PC-9 (cell line): ENCODE measurements at regions of chr17 and their contacts with region 1.

Region 1: DNA sequence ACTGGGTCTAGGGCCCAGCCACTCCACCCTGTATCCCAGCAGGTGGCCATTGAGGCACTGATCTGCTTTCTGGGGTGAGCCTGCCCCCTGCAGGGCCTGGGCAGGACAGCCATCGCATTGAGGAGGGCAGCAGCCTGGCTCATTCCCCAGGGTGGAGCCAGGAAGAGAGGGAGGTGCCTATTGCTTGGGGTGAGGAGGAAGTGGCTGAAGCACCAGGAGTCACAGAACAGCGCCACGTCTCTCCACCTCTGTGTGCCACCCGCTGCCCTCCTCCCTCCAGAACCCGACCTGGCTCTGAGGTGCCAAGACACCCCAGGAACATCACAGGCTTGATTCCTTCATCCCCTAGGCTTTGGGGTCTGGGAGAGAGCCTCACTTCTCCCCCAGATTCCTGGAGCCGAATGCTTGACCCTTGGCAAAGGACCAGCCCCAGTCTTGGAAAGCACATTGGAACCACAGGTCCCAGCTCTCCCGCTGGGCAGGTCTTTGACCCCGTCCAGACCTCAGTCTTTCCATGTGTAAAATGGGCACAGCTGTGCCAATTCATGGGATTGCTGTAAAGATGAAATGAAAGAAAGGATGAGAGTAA is 7.2 kb upstream of the KRT36 start:
- DNase-seq: peak; percentile 82 to 87
- H3K4me3 ChIP-seq: no peak overlapping the region
- H3K27ac ChIP-seq: no peak overlapping the region; the same call in 1 of the 2 replicates
- H3K4me1 ChIP-seq: peaks cover 83% of the 10 kb centered on the region
- H3K27me3 ChIP-seq: no peaks in the 10 kb centered on the region
- CTCF ChIP-seq: peak; percentile 86

Region 2: DNA sequence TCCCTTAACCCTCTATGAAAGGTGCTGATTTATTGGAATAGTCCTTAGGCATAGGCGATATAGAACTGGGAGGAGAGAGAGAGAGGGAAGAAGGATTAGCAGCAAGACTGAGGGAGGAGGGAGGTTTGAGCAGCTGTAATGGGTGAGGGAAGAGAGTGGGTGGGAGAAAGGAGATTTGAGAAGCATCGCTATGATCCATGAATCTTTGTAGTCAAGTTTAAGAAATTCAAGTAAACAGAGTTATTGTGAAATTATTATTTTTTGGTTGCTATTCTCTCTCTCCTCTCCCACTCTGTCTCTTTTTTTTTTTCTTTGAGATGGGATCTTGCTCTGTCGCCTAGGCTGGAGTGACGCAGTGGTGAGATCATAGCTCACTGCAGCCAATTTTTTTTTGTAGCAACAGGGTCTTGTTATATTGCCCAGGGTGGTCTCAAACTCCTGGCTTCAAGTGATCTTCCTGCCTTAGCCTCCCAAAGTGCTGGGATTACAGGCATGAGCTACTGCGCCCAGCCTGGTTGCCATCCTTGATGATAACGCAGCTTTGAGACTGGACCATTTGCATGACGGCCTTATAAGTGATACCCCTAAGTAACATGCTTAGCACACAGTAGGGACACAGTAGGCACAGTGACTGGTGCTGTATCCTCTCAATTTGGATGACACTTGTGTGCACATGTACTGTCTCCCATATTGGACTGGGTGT is 974.5 kb before region 1 on chr17:
- CTCF ChIA-PET with region 1: interaction called, 11 read pairs
- POLR2A ChIA-PET with region 1: no interaction called
- intact Hi-C with region 1: no loop called
- DNase-seq: peak in 1 of 2 experiments; percentile 28
- H3K4me3 ChIP-seq: no peak overlapping the region
- H3K27ac ChIP-seq: peak overlapping the region; percentile 81
- H3K4me1 ChIP-seq: peaks cover 62% of the 10 kb centered on the region
- H3K27me3 ChIP-seq: no peaks in the 10 kb centered on the region
- CTCF ChIP-seq: no peak

Region 3: GRCh38 chr17:41417576-41418015 is 79.3 kb before region 1 on chr17:
- CTCF ChIA-PET with region 1: interaction called, 9 read pairs
- POLR2A ChIA-PET with region 1: interaction called, 5 read pairs
- intact Hi-C with region 1: loop called (anchors 1 kb)
- DNase-seq: peak; percentile 69 to 98
- H3K4me3 ChIP-seq: no peak overlapping the region
- H3K27ac ChIP-seq: peak overlapping the region; percentile 89
- H3K4me1 ChIP-seq: peaks cover 76% of the 10 kb centered on the region
- H3K27me3 ChIP-seq: no peaks in the 10 kb centered on the region
- CTCF ChIP-seq: peak; percentile 82